ENCODE measurements at regions of chr1 and their contacts with region 1.

Region 1: DNA sequence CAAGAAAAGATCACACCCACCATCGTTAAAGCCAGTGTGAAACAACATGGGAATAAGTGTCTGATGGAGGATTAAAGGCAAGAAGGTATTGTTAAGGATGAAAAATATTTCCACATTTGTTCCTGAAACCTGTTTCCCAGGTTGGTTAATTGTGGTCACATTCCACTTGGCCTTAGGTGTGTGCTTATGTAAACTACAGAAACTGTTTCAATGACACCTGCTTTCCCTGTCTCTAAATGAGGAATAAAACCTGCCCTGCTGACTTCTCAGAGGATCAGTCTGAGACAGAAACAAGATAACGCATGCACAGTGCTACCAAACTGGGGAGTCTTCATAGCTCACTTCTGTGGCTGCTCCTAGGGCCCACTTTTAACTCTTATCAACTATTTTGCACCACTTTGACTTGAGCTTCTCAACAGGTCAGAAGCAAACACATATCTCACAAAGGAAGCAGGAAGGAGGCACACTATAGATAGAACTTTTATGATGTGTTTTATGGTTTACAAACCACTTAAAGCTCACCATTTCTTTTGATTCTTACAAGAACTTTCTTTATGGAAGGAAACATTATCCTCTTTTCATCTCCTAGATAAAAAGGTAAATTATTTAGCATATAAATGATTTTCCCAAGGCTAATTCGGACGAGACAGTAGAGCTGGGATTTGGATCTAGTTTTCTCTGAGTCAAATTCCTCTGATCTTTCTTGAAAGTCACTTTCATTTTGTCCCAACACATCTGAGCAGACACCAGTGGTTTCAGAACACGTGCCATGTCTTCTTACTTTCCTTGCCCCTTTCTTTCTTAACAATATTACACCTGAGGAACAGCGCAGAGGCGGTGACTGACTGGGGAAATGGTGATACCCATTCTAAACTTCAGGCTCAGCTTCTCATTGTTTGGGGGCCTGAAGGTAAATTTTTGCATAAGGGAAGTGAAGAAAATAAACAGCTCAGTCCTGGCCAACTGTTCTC is 33.4 kb downstream of the CYP2J2 start:
- DNase-seq: no peak
- ATAC-seq: no peak

Region 2: GRCh38 chr1:59926381-59927123 is 33.4 kb after region 1 on chr1 and contains the start of gene CYP2J2:
- intact Hi-C with region 1: loop called (anchors 5 kb)
- DNase-seq: peak; percentile 81
- ATAC-seq: peak; percentile 97
- total RNA-seq, gene CYP2J2: 76.4 TPM

Measured in Right ventricle myocardium inferior (tissue), 1 donor.